Colonic mucosa (tissue), 4 donors: ENCODE measurements at regions of chr10 and their contacts with region 1.

Region 1: GRCh38 chr10:60032723-60033122 is 126.4 kb upstream of the CCDC6 start:
- DNase-seq: peak; percentile 78
- H3K4me3 ChIP-seq: no peak overlapping the region
- H3K27ac ChIP-seq: no peak overlapping the region
- H3K4me1 ChIP-seq: no peaks in the 10 kb centered on the region
- H3K27me3 ChIP-seq: no peaks in the 10 kb centered on the region
- CTCF ChIP-seq: peak; percentile 35

Region 2: DNA sequence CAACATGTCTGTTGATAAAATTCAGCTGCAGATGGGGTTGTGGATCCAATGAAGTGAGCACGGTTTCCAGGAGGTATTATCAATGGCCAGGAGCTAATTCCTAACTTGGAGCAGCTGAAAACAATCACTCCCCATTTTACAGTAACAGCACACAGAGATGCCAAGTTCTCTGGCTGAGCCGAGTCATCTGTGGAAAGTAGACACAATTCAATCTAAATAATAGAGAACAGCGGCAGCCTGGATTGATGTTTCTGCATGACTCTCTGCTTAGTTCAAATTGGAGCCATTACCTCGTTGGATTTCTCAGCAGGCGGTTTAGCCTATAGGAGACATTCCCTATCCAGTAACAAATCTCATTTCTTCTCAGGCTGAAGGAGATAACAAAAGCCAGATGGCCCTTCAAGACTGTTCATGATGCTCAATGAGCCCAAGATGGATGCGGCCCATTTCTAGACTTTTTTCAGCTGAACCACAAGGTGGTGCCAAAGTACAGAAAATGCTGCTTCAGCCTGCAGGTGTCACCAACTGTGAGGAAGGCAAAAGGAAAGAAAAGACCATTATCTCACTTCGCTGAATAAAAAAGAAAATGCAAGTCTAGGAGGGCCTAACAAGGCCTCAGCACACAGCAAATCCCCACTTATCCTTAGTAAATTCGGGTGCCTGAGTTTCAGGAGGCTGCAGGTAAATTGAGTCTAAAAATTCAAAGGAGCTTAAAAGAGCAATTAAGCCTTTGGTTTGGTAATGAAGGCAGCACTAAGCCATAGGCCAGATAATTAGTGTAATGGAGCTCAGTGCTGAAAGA is 406.8 kb before region 1 on chr10:
- intact Hi-C with region 1: loop called (anchors 5 kb)
- DNase-seq: peak; percentile 37
- H3K4me3 ChIP-seq: no peak overlapping the region
- H3K27ac ChIP-seq: no peak overlapping the region
- H3K4me1 ChIP-seq: peaks cover 4% of the 10 kb centered on the region
- H3K27me3 ChIP-seq: no peaks in the 10 kb centered on the region
- CTCF ChIP-seq: peak; percentile 68

Region 3: GRCh38 chr10:59830601-59831259 is 202.0 kb before region 1 on chr10:
- intact Hi-C with region 1: loop called (anchors 5 kb)
- DNase-seq: peak; percentile 66
- H3K4me3 ChIP-seq: no peak overlapping the region
- H3K27ac ChIP-seq: no peak overlapping the region
- H3K4me1 ChIP-seq: no peaks in the 10 kb centered on the region
- H3K27me3 ChIP-seq: no peaks in the 10 kb centered on the region
- CTCF ChIP-seq: peak; percentile 69

Region 4: GRCh38 chr10:59865101-59865500 is 167.6 kb before region 1 on chr10:
- intact Hi-C with region 1: loop called (anchors 10 kb)
- DNase-seq: peak; percentile 74
- H3K4me3 ChIP-seq: no peak overlapping the region
- H3K27ac ChIP-seq: peak overlapping the region; percentile 43
- H3K4me1 ChIP-seq: no peaks in the 10 kb centered on the region
- H3K27me3 ChIP-seq: no peaks in the 10 kb centered on the region
- CTCF ChIP-seq: peak; percentile 33

Region 5: GRCh38 chr10:59906417-59907202 is 126.1 kb before region 1 on chr10 and contains the start of gene CCDC6:
- intact Hi-C with region 1: loop called (anchors 10 kb)
- DNase-seq: peak; percentile 95
- H3K4me3 ChIP-seq: peak within 1 kb of the TSS; percentile 85
- H3K27ac ChIP-seq: peak within 1 kb of the TSS; percentile 93
- H3K4me1 ChIP-seq: peaks cover 4% of the 10 kb centered on the region
- H3K27me3 ChIP-seq: no peaks in the 10 kb centered on the region
- CTCF ChIP-seq: peak; percentile 78
- total RNA-seq, gene CCDC6: 65.8 to 91.0 TPM

Region 6: DNA sequence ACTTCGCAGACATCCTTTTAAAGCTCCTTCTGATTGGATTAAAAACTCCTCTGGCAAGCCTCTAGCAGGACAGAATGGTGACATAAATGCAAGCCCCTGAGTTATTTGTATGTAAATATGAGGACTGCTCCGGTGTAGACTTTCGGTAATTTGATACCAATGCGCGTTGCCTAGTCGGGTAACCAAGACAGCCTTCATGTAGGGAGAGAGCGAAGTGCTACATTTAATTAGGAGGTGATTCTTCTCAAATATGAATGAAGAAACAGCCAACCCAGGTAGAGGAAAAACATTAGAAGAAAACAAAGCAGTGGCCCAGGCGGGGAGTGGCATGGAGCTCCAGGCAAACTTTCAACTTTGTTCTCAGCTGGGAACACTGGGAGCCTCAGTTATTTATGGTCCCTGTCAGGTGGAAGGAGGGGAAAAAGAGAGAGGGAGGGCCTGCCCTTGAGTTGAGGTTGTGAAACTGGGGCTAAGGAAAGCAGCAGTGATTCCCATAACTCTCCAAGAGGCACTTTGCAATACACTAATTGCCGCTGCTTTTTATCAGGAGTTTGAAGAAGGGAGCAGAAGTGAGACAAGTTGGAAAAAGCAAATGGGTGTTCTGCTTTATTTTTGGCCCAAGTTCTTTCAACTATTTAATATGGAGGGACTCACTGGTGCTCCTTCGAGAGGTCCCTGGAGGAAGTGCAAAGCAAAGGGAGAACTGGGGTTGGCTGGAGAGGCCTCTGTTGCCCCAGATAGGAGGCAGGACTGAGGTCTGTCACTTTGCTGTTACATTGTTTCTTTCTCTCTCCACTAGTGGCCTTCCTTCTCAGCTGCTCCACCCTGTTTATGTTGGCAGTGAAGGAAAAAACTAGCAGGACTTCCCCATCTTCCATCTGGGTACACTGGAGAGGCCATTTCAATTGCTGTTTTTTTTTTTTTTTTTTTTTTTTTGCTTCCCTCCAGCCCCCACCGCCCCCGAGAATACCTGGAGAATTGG is 108.2 kb after region 1 on chr10:
- intact Hi-C with region 1: no loop called
- DNase-seq: peak; percentile 76
- H3K4me3 ChIP-seq: peak overlapping the region; percentile 8
- H3K27ac ChIP-seq: peak overlapping the region; percentile 81
- H3K4me1 ChIP-seq: no peaks in the 10 kb centered on the region
- H3K27me3 ChIP-seq: no peaks in the 10 kb centered on the region
- CTCF ChIP-seq: no peak

Region 7: GRCh38 chr10:60377955-60378354 is 345.2 kb after region 1 on chr10:
- intact Hi-C with region 1: no loop called
- DNase-seq: no peak
- H3K4me3 ChIP-seq: no peak overlapping the region
- H3K27ac ChIP-seq: no peak overlapping the region
- H3K4me1 ChIP-seq: no peaks in the 10 kb centered on the region
- H3K27me3 ChIP-seq: no peaks in the 10 kb centered on the region
- CTCF ChIP-seq: no peak